AG04449 (cell line): ENCODE measurements at regions of chr9 and their contacts with region 1.

Region 1: DNA sequence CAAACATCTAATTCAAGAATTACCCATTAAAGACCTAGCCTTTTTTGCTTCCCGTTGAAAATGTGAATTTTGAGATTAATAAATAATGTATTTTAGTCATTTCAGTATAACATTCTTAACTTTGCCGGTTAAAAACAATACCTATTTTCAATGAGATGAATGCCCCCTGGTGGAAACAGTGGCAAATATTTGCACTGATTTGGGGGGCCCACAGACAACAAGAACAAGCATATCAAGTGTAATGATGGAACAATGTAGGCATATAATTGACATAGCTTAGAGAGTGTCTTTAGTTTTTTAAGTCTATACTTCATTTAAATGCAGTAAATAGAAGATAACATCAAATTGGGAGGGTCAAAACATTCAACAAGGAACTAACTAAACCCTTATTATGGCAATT is 111.9 kb downstream of the NTRK2 start:
- DNase-seq: no peak
- H3K4me3 ChIP-seq: no peak overlapping the region
- CTCF ChIP-seq: peak; percentile 30

Region 2: GRCh38 chr9:84397151-84397728 is 384.2 kb before region 1 on chr9:
- CTCF ChIA-PET with region 1: interaction called, 20 read pairs
- POLR2A ChIA-PET with region 1: no interaction called
- DNase-seq: no peak
- H3K4me3 ChIP-seq: no peak overlapping the region
- CTCF ChIP-seq: peak; percentile 81

Region 3: GRCh38 chr9:84668196-84669012 is 113.1 kb before region 1 on chr9:
- CTCF ChIA-PET with region 1: interaction called, 14 read pairs
- POLR2A ChIA-PET with region 1: no interaction called
- DNase-seq: no peak
- H3K4me3 ChIP-seq: peak overlapping the region; percentile 55
- CTCF ChIP-seq: peak; percentile 73

Region 4: DNA sequence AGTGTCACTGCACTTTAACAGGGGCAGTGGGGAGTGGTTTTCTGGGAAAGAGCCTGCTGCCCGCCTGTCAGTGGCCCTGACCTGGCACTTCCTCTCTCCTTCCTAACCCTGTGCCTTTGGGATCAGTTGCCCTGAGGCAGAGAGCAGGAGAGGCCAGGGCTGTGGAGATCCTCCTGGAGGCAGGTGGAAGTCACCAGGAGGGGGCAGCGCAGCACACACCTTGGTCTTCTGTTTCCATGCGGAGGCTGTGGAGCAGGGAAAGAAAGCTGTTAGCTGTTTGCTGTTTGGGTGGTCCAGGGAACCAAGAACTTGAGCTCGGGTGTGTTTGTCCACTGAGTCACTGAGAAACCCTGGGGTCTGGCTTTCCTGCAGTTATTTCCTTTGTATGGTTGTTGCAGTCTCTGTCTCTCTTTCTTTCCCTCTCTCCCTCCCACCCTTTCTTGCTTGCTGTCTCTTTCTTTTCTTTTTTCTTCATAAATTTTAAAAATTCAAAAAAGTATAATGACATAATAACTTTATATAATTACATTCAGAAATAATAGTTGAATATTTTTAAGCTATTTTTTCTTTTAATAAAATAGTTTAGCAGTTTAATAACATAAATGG is 83.8 kb before region 1 on chr9:
- CTCF ChIA-PET with region 1: interaction called, 209 read pairs
- POLR2A ChIA-PET with region 1: no interaction called
- DNase-seq: no peak
- H3K4me3 ChIP-seq: no peak overlapping the region
- CTCF ChIP-seq: peak; percentile 92

Region 5: GRCh38 chr9:84793251-84793650 is 11.8 kb after region 1 on chr9:
- CTCF ChIA-PET with region 1: interaction called, 31 read pairs
- POLR2A ChIA-PET with region 1: no interaction called
- DNase-seq: no peak
- H3K4me3 ChIP-seq: no peak overlapping the region
- CTCF ChIP-seq: no peak

Region 6: GRCh38 chr9:84804951-84805694 is 23.7 kb after region 1 on chr9:
- CTCF ChIA-PET with region 1: interaction called, 10 read pairs
- POLR2A ChIA-PET with region 1: no interaction called
- DNase-seq: no peak
- H3K4me3 ChIP-seq: no peak overlapping the region
- CTCF ChIP-seq: no peak